ENCODE measurements at regions of chr10 and their contacts with region 1.

Region 1: GRCh38 chr10:11165591-11166543 is 148.2 kb downstream of the CELF2 start:
- DNase-seq: peak; percentile 53 to 90
- ATAC-seq: peak; percentile 52 to 68 (median 54)
- H3K4me3 ChIP-seq: peak overlapping the region; percentile 93
- H3K4me3 Mint-ChIP-seq: no peak overlapping the region
- H3K27ac ChIP-seq: peak overlapping the region; percentile 86
- H3K27ac Mint-ChIP-seq: no peak overlapping the region
- H3K4me1 ChIP-seq: peaks cover 54% of the 10 kb centered on the region
- H3K4me1 Mint-ChIP-seq: peaks cover 45 to 47% of the 10 kb centered on the region in 2 donors
- H3K27me3 ChIP-seq: no peaks in the 10 kb centered on the region
- H3K27me3 Mint-ChIP-seq: no peaks in the 10 kb centered on the region
- CTCF ChIP-seq: peak; percentile 71

Region 2: DNA sequence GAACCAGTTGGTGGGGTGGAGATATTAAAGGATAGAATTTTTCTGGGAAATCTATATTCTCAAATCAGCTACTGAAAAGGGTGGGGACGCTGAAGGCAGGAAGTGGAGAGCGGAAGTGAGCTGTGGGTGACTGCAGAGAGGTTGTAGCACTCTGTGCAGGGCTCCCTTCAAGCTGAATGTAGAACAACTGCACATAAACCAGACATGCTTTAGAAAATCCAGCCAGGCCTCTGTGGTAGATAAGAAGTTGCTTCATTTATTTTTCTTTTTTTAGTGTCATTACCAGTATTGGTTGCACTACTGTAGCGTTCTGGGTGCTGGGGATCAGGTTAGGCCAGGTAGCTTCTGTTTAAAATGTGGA is 20.4 kb before region 1 on chr10:
- intact Hi-C with region 1: loop called (anchors 1 kb)
- DNase-seq: peak; percentile 49 to 88
- ATAC-seq: peak; percentile 63 to 87 (median 85)
- H3K4me3 ChIP-seq: no peak overlapping the region
- H3K4me3 Mint-ChIP-seq: peak overlapping the region; percentile 87
- H3K27ac ChIP-seq: peak overlapping the region; percentile 74
- H3K27ac Mint-ChIP-seq: peak overlapping the region; percentile 92 to 94
- H3K4me1 ChIP-seq: peaks cover 73% of the 10 kb centered on the region
- H3K4me1 Mint-ChIP-seq: peaks cover 93 to 97% of the 10 kb centered on the region in 2 donors
- H3K27me3 ChIP-seq: no peaks in the 10 kb centered on the region
- H3K27me3 Mint-ChIP-seq: no peaks in the 10 kb centered on the region
- CTCF ChIP-seq: no peak

Measured in natural killer cell (primary cell).